CD14-positive monocyte (primary cell): ENCODE measurements at regions of chr19 and their contacts with region 1.

Region 1: GRCh38 chr19:36772311-36773222 is at the start of gene ZNF850:
- DNase-seq: peak; percentile 89 to 93 (median 92)
- H3K4me3 ChIP-seq: peak within 1 kb of the TSS; percentile 71 to 97 (median 90)
- H3K4me3 Mint-ChIP-seq: peak within 1 kb of the TSS; percentile 93 to 97
- H3K27ac ChIP-seq: peak within 1 kb of the TSS; percentile 70 to 80
- H3K27ac Mint-ChIP-seq: peak within 1 kb of the TSS; percentile 68 to 94 (median 91)
- H3K4me1 ChIP-seq: peaks cover 23 to 27% of the 10 kb centered on the region in 2 donors
- H3K4me1 Mint-ChIP-seq: peaks cover 22% of the 10 kb centered on the region
- H3K27me3 ChIP-seq: no peaks in the 10 kb centered on the region
- H3K27me3 Mint-ChIP-seq: peaks cover 0 to 6% (median 0%) of the 10 kb centered on the region in 3 donors
- CTCF ChIP-seq: no peak
- polyA plus RNA-seq, gene ZNF850: 0.02 to 0.15 (median 0.08) TPM

Region 2: GRCh38 chr19:36489118-36489919 is 283.2 kb before region 1 on chr19 and contains the start of gene ZNF566:
- intact Hi-C with region 1: loop called in 1 of 2 experiments (anchors 2 kb)
- DNase-seq: peak; percentile 78 to 84 (median 84)
- H3K4me3 ChIP-seq: peak within 1 kb of the TSS; percentile 68 to 99 (median 92)
- H3K4me3 Mint-ChIP-seq: peak within 1 kb of the TSS; percentile 99
- H3K27ac ChIP-seq: peak within 1 kb of the TSS; percentile 64 to 89
- H3K27ac Mint-ChIP-seq: peak within 1 kb of the TSS; percentile 92 to 99 (median 96)
- H3K4me1 ChIP-seq: peaks cover 9 to 18% of the 10 kb centered on the region in 2 donors
- H3K4me1 Mint-ChIP-seq: peaks cover 19% of the 10 kb centered on the region
- H3K27me3 ChIP-seq: no peaks in the 10 kb centered on the region
- H3K27me3 Mint-ChIP-seq: no peaks in the 10 kb centered on the region
- CTCF ChIP-seq: no peak
- polyA plus RNA-seq, gene ZNF566: 0.95 to 3.9 (median 3.6) TPM

Region 3: GRCh38 chr19:36573020-36573885 is 199.3 kb before region 1 on chr19 and contains the start of gene ZNF529:
- intact Hi-C with region 1: loop called (anchors 5 to 10 kb)
- DNase-seq: peak; percentile 84 to 88 (median 86)
- H3K4me3 ChIP-seq: peak within 1 kb of the TSS; percentile 65 to 92 (median 76)
- H3K4me3 Mint-ChIP-seq: peak within 1 kb of the TSS; percentile 93 to 98
- H3K27ac ChIP-seq: peak within 1 kb of the TSS; percentile 45 to 92
- H3K27ac Mint-ChIP-seq: peak within 1 kb of the TSS; percentile 84 to 96 (median 94)
- H3K4me1 ChIP-seq: peaks cover 17 to 21% of the 10 kb centered on the region in 2 donors
- H3K4me1 Mint-ChIP-seq: peaks cover 22% of the 10 kb centered on the region
- H3K27me3 ChIP-seq: no peaks in the 10 kb centered on the region
- H3K27me3 Mint-ChIP-seq: peaks cover 0 to 3% (median 0%) of the 10 kb centered on the region in 3 donors
- CTCF ChIP-seq: no peak
- polyA plus RNA-seq, gene ZNF529: 1.1 to 2.7 (median 1.3) TPM

Region 4: DNA sequence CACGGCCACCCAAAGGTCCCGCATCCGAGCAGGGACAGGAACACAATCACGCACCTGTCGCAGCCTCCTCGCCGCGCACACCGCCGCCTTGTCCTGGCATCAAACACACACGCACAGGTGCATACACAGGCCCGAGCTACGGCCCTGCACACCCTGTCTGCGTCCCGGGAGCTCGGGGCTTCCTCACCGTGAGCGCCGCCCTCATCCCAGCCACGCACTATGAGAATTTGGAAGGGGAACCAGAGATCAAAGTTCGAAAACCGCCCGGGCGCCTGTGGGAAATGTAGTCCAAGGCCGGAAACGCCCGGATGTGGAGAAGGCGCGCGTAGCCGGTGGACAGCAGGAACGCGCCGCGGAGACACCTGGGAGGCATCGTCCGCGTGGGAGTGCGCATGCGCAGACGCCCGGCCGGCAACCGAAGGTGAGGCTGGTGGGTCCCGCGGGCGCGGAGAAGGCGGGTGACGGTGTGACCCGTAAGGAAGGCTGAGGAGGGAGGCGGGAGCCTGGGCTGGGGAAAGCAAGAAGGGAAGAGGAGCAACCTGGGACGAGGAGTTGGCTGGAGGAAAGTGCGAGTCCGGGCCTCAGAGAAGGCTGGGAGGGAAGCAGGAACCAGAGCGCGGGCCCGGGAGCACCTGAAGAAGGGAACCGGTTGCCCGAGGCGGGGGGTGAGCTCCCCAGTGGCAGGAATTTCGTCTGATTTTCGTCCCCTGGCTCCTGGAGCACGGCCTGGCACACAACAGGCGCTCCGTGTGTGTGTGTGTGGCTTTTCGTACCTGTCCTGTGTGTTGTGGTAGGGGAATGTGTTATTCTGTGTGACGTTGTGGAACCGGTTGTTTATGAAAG is 85.1 kb before region 1 on chr19 and contains the start of gene ZNF567:
- intact Hi-C with region 1: loop called (anchors 5 kb)
- DNase-seq: peak; percentile 88 to 90 (median 89)
- H3K4me3 ChIP-seq: peak within 1 kb of the TSS; percentile 35 to 92 (median 63)
- H3K4me3 Mint-ChIP-seq: peak within 1 kb of the TSS; percentile 96 to 99
- H3K27ac ChIP-seq: peak within 1 kb of the TSS; percentile 13 to 77
- H3K27ac Mint-ChIP-seq: peak within 1 kb of the TSS; percentile 66 to 90 (median 83)
- H3K4me1 ChIP-seq: peaks cover 15 to 23% of the 10 kb centered on the region in 2 donors
- H3K4me1 Mint-ChIP-seq: peaks cover 24% of the 10 kb centered on the region
- H3K27me3 ChIP-seq: no peaks in the 10 kb centered on the region
- H3K27me3 Mint-ChIP-seq: peaks cover 0 to 1% (median 0%) of the 10 kb centered on the region in 3 donors
- CTCF ChIP-seq: no peak
- polyA plus RNA-seq, gene ZNF567: 0.84 to 1.7 (median 1.5) TPM

Region 5: GRCh38 chr19:36707134-36707533 is 65.4 kb before region 1 on chr19:
- intact Hi-C with region 1: no loop called
- DNase-seq: no peak
- H3K4me3 ChIP-seq: peak overlapping the region in 1 of 3 experiments; percentile 13
- H3K4me3 Mint-ChIP-seq: no peak overlapping the region
- H3K27ac ChIP-seq: no peak overlapping the region
- H3K27ac Mint-ChIP-seq: no peak overlapping the region
- H3K4me1 ChIP-seq: no peaks in the 10 kb centered on the region
- H3K4me1 Mint-ChIP-seq: no peaks in the 10 kb centered on the region
- H3K27me3 ChIP-seq: no peaks in the 10 kb centered on the region
- H3K27me3 Mint-ChIP-seq: peaks cover 0 to 2% (median 2%) of the 10 kb centered on the region in 3 donors
- CTCF ChIP-seq: no peak

Region 6: GRCh38 chr19:36833430-36833829 is 60.9 kb after region 1 on chr19:
- intact Hi-C with region 1: no loop called
- DNase-seq: no peak
- H3K4me3 ChIP-seq: no peak overlapping the region
- H3K4me3 Mint-ChIP-seq: no peak overlapping the region
- H3K27ac ChIP-seq: no peak overlapping the region
- H3K27ac Mint-ChIP-seq: no peak overlapping the region
- H3K4me1 ChIP-seq: peaks cover 9 to 12% of the 10 kb centered on the region in 2 donors
- H3K4me1 Mint-ChIP-seq: no peaks in the 10 kb centered on the region
- H3K27me3 ChIP-seq: no peaks in the 10 kb centered on the region
- H3K27me3 Mint-ChIP-seq: peaks cover 0 to 1% (median 0%) of the 10 kb centered on the region in 3 donors
- CTCF ChIP-seq: no peak

Region 7: GRCh38 chr19:36850559-36851442 is 78.2 kb after region 1 on chr19 and contains the start of gene ZNF345:
- intact Hi-C with region 1: loop called (anchors 5 kb)
- DNase-seq: peak; percentile 81 to 89 (median 81)
- H3K4me3 ChIP-seq: peak within 1 kb of the TSS; percentile 67 to 98 (median 86)
- H3K4me3 Mint-ChIP-seq: no peak within 1 kb of the TSS
- H3K27ac ChIP-seq: peak within 1 kb of the TSS; percentile 63 to 86
- H3K27ac Mint-ChIP-seq: no peak within 1 kb of the TSS
- H3K4me1 ChIP-seq: peaks cover 16 to 31% of the 10 kb centered on the region in 2 donors
- H3K4me1 Mint-ChIP-seq: peaks cover 2% of the 10 kb centered on the region
- H3K27me3 ChIP-seq: no peaks in the 10 kb centered on the region
- H3K27me3 Mint-ChIP-seq: peaks cover 1 to 3% (median 3%) of the 10 kb centered on the region in 3 donors
- CTCF ChIP-seq: no peak
- polyA plus RNA-seq, gene ZNF345: 0.66 to 2.3 (median 1.3) TPM

Region 8: DNA sequence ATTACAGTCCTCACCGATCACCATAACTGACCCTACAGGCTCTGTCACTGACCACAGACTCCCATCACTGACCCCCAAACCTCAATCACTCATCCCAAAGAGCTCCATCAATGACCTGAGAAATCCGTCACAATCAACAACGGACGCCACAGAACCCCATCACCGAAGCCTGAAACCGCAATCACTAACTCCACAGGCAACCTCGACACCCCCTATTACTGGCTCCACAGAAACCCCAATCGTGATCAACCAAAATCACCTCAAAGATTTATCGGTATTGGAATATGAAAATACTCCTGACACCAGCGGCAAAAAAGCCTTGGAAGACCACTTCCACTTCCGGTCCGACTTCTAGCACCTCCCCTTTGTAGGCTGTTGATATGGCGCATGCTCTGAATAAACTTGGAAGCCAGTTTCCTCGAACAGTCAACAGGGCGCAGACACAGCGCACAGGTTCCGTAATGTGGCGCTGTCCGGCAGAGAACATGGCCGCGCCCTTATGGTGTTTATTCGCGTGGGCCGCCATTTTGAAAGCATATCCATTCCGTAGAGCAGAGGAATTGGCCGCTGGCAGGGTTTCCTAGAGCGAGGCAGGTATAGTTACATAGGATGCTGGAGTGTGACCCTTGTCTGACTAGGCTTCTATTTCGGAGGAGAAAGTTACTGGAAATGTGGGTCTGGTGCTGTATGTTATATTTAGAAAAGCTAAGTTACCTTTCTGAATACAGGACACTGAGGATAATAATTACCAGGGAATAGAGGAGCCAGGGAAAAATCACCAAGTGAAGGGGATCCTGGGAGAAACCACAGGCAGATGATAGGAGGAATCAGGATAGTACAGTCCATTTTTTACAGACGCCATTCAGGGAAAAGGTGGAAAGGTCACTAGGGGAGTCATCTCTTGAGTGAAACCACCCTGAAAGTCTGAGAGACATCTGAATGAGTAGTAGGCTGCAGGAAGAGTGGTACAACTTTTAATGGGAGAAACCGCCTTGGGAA is 400.1 kb after region 1 on chr19 and contains the start of gene ZNF585A:
- intact Hi-C with region 1: loop called in 1 of 2 experiments (anchors 10 kb)
- DNase-seq: peak; percentile 94 to 98 (median 97)
- H3K4me3 ChIP-seq: peak within 1 kb of the TSS; percentile 70 to 100 (median 98)
- H3K4me3 Mint-ChIP-seq: no peak within 1 kb of the TSS
- H3K27ac ChIP-seq: peak within 1 kb of the TSS; percentile 46 to 87
- H3K27ac Mint-ChIP-seq: no peak within 1 kb of the TSS
- H3K4me1 ChIP-seq: peaks cover 5 to 17% of the 10 kb centered on the region in 2 donors
- H3K4me1 Mint-ChIP-seq: no peaks in the 10 kb centered on the region
- H3K27me3 ChIP-seq: no peaks in the 10 kb centered on the region
- H3K27me3 Mint-ChIP-seq: peaks cover 0 to 1% (median 0%) of the 10 kb centered on the region in 3 donors
- CTCF ChIP-seq: no peak
- polyA plus RNA-seq, gene ZNF585A: 6.4 to 25.5 (median 23.2) TPM

Region 9: GRCh38 chr19:37466798-37467607 is 694.4 kb after region 1 on chr19 and contains the start of gene ZNF569:
- intact Hi-C with region 1: loop called in 1 of 2 experiments (anchors 5 kb)
- DNase-seq: peak; percentile 75 to 81 (median 78)
- H3K4me3 ChIP-seq: peak within 1 kb of the TSS; percentile 45 to 98 (median 64)
- H3K4me3 Mint-ChIP-seq: peak within 1 kb of the TSS; percentile 96 to 98
- H3K27ac ChIP-seq: peak within 1 kb of the TSS; percentile 74 to 86
- H3K27ac Mint-ChIP-seq: peak within 1 kb of the TSS; percentile 67 to 95 (median 90)
- H3K4me1 ChIP-seq: peaks cover 26 to 33% of the 10 kb centered on the region in 2 donors
- H3K4me1 Mint-ChIP-seq: peaks cover 30% of the 10 kb centered on the region
- H3K27me3 ChIP-seq: no peaks in the 10 kb centered on the region
- H3K27me3 Mint-ChIP-seq: no peaks in the 10 kb centered on the region
- CTCF ChIP-seq: no peak
- polyA plus RNA-seq, gene ZNF569: 0.79 to 1.2 (median 0.83) TPM